CD8-positive, alpha-beta T cell (primary cell): ENCODE measurements at regions of chr2 and their contacts with region 1.

Region 1: DNA sequence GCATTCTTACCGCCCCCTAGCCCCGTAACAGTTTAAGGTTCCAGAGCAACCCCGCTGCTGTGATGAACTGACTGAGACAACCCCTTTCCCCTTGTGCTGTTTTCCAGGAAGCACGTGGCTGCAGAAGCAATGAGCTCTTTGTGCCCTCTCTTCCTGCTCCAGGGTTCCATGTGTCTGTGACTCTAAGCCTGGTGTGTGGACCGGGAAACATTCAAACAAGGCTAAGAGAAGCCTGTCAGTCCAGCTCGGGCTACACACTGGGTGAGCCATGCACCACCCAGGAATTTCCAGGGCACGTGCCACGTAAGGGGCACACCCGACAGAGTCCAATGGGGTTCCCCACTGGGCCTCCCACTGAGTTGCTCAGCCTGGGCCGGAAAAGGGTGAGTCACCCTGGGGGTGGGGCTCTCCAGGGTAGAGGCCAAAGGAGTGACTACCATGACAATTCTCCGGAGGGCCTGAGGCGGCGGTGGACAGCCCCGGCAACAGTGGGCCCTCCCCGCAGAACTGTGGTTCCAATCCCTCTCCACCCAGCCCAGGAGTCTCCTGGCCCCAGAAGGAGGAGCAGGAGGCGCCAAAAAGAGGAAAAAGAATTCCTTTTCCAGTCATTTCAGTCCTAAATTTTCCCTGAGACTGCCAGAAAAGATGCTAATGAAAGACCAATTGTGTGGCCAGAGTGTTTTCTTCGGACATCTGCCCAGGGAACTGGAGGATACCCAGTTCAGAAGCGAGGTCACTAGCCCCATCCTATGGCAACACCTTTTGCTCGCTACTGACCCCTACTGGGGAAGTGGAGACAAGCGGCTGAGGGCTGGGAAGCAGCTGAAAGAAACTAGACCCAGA is 157.8 kb upstream of the SLC1A4 start:
- DNase-seq: peak; percentile 67 to 91 (median 83)
- ATAC-seq: peak; percentile 88
- H3K4me3 ChIP-seq: peak overlapping the region in 1 of 2 experiments; percentile 32
- H3K4me3 Mint-ChIP-seq: peak overlapping the region; percentile 46
- H3K27ac ChIP-seq: peak overlapping the region in 1 of 2 experiments; percentile 4
- H3K27ac Mint-ChIP-seq: no peak overlapping the region
- H3K4me1 ChIP-seq: peaks cover 10% of the 10 kb centered on the region
- H3K4me1 Mint-ChIP-seq: peaks cover 11% of the 10 kb centered on the region
- H3K27me3 ChIP-seq: peaks cover 0 to 5% of the 10 kb centered on the region in 2 experiments
- H3K27me3 Mint-ChIP-seq: peaks cover 3% of the 10 kb centered on the region
- CTCF ChIP-seq: peak; percentile 94

Region 2: GRCh38 chr2:64609227-64609941 is 222.0 kb before region 1 on chr2:
- CTCF ChIA-PET with region 1: interaction called, 23 read pairs
- POLR2A ChIA-PET with region 1: interaction called, 3 read pairs
- intact Hi-C with region 1: loop called in 1 of 2 experiments (anchors 1 kb)
- DNase-seq: peak; percentile 37 to 85 (median 66)
- ATAC-seq: peak; percentile 65
- H3K4me3 ChIP-seq: peak overlapping the region; percentile 56 to 63
- H3K4me3 Mint-ChIP-seq: peak overlapping the region; percentile 79
- H3K27ac ChIP-seq: peak overlapping the region in 1 of 2 experiments; percentile 49
- H3K27ac Mint-ChIP-seq: peak overlapping the region; percentile 66
- H3K4me1 ChIP-seq: peaks cover 26% of the 10 kb centered on the region
- H3K4me1 Mint-ChIP-seq: peaks cover 29% of the 10 kb centered on the region
- H3K27me3 ChIP-seq: no peaks in the 10 kb centered on the region
- H3K27me3 Mint-ChIP-seq: no peaks in the 10 kb centered on the region
- CTCF ChIP-seq: peak; percentile 23

Region 3: GRCh38 chr2:64767670-64768468 is 63.5 kb before region 1 on chr2:
- CTCF ChIA-PET with region 1: interaction called, 10 read pairs
- POLR2A ChIA-PET with region 1: interaction called, 4 read pairs
- intact Hi-C with region 1: loop called (anchors 1 to 5 kb)
- DNase-seq: peak; percentile 45 to 90 (median 74)
- ATAC-seq: peak; percentile 74
- H3K4me3 ChIP-seq: peak overlapping the region; percentile 66 to 68
- H3K4me3 Mint-ChIP-seq: peak overlapping the region; percentile 92
- H3K27ac ChIP-seq: peak overlapping the region; percentile 61 to 88
- H3K27ac Mint-ChIP-seq: peak overlapping the region; percentile 93
- H3K4me1 ChIP-seq: peaks cover 11% of the 10 kb centered on the region
- H3K4me1 Mint-ChIP-seq: peaks cover 16% of the 10 kb centered on the region
- H3K27me3 ChIP-seq: no peaks in the 10 kb centered on the region
- H3K27me3 Mint-ChIP-seq: no peaks in the 10 kb centered on the region
- CTCF ChIP-seq: no peak

Region 4: DNA sequence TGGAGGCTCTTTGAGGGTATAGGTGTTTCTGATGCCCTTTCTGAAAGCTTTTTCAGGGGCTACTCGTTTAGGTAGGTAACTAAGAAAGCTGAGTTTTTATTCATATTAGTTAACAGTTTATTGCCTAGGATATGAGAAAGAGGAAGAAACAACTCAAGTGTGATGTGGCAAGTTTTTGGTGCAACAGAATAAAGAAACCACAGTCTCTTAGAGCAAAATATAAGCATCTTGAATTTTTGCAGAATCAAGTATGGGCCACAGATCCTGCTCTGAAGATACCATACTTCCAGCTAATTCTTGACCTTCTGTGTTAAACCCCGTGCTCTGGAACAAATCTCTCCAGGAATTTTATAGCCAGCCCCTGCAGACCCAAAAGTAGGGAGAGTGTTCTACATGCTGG is 10.1 kb after region 1 on chr2:
- CTCF ChIA-PET with region 1: interaction called, 11 read pairs
- POLR2A ChIA-PET with region 1: no interaction called
- intact Hi-C with region 1: no loop called
- DNase-seq: no peak
- ATAC-seq: no peak
- H3K4me3 ChIP-seq: no peak overlapping the region
- H3K4me3 Mint-ChIP-seq: no peak overlapping the region
- H3K27ac ChIP-seq: no peak overlapping the region
- H3K27ac Mint-ChIP-seq: no peak overlapping the region
- H3K4me1 ChIP-seq: no peaks in the 10 kb centered on the region
- H3K4me1 Mint-ChIP-seq: peaks cover 5% of the 10 kb centered on the region
- H3K27me3 ChIP-seq: no peaks in the 10 kb centered on the region
- H3K27me3 Mint-ChIP-seq: no peaks in the 10 kb centered on the region
- CTCF ChIP-seq: no peak

Region 5: GRCh38 chr2:64978514-64979268 is 147.3 kb after region 1 on chr2:
- CTCF ChIA-PET with region 1: no interaction called
- POLR2A ChIA-PET with region 1: no interaction called
- intact Hi-C with region 1: no loop called
- DNase-seq: peak in 2 of 9 experiments; percentile 33 to 48
- ATAC-seq: peak; percentile 40
- H3K4me3 ChIP-seq: no peak overlapping the region
- H3K4me3 Mint-ChIP-seq: no peak overlapping the region
- H3K27ac ChIP-seq: no peak overlapping the region
- H3K27ac Mint-ChIP-seq: no peak overlapping the region
- H3K4me1 ChIP-seq: no peaks in the 10 kb centered on the region
- H3K4me1 Mint-ChIP-seq: no peaks in the 10 kb centered on the region
- H3K27me3 ChIP-seq: no peaks in the 10 kb centered on the region
- H3K27me3 Mint-ChIP-seq: no peaks in the 10 kb centered on the region
- CTCF ChIP-seq: peak; percentile 17